Esophagus muscularis mucosa (tissue), 4 donors: ENCODE measurements at regions of chr17 and their contacts with region 1.

Region 1: GRCh38 chr17:31015639-31016038 is 44.8 kb downstream of the RNF135 start:
- DNase-seq: no peak
- H3K4me3 ChIP-seq: no peak overlapping the region
- H3K27ac ChIP-seq: no peak overlapping the region
- H3K4me1 ChIP-seq: peaks cover 4 to 10% (median 7%) of the 10 kb centered on the region in 4 donors
- H3K27me3 ChIP-seq: no peaks in the 10 kb centered on the region
- CTCF ChIP-seq: no peak
- EP300 ChIP-seq: no peak
- POLR2A ChIP-seq: no peak

Region 2: GRCh38 chr17:31094600-31095238 is 79.1 kb after region 1 on chr17 and contains the start of gene NF1:
- intact Hi-C with region 1: loop called (anchors 10 kb)
- DNase-seq: peak; percentile 99
- H3K4me3 ChIP-seq: peak within 1 kb of the TSS; percentile 74 to 94 (median 88)
- H3K27ac ChIP-seq: peak within 1 kb of the TSS; percentile 91 to 97 (median 94)
- H3K4me1 ChIP-seq: peaks cover 9 to 18% (median 16%) of the 10 kb centered on the region in 4 donors
- H3K27me3 ChIP-seq: no peaks in the 10 kb centered on the region
- CTCF ChIP-seq: no peak
- EP300 ChIP-seq: no peak
- POLR2A ChIP-seq: no peak
- total RNA-seq, gene NF1: 40.9 to 64.8 (median 44.5) TPM

Region 3: GRCh38 chr17:31216053-31216751 is 200.6 kb after region 1 on chr17:
- intact Hi-C with region 1: loop called (anchors 2 kb)
- DNase-seq: no peak
- H3K4me3 ChIP-seq: no peak overlapping the region
- H3K27ac ChIP-seq: peak overlapping the region in 1 of 4 donors; percentile 11
- H3K4me1 ChIP-seq: peaks cover 0 to 4% (median 2%) of the 10 kb centered on the region in 4 donors
- H3K27me3 ChIP-seq: no peaks in the 10 kb centered on the region
- CTCF ChIP-seq: peak; percentile 46 to 67 (median 63)
- EP300 ChIP-seq: no peak
- POLR2A ChIP-seq: no peak